Heart left ventricle (tissue), 16 donors: ENCODE measurements at regions of chr9 and their contacts with region 1.

Region 1: DNA sequence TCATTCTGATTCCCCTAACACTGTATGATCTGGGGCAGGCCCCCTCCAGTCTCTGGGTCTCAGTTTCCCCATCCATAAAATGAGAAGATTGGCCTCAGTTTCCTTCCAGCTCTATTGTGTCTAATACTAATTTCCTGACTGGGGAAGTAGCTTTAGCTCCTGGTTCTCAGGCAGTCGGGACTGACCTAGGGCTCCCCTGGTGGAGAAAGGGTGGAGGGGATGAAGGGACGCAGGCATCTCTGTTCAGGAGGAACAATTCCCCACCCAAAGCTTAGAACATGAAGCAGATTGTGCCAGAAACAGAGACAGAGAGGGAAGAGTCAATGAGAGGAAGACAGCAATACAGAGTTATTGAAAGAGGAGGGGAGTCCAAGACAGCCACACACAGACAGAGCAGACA is 14.2 kb upstream of the PTGS1 start:
- DNase-seq: no peak
- ATAC-seq: no peak
- H3K4me3 ChIP-seq: no peak overlapping the region
- H3K27ac ChIP-seq: no peak overlapping the region
- H3K4me1 ChIP-seq: peaks cover 0 to 7% (median 0%) of the 10 kb centered on the region in 12 donors
- H3K27me3 ChIP-seq: no peaks in the 10 kb centered on the region
- CTCF ChIP-seq: peak in 4 of 12 donors; percentile 12 to 24 (median 13)
- POLR2A ChIP-seq: no peak

Region 2: GRCh38 chr9:122113574-122113973 is 243.1 kb before region 1 on chr9:
- intact Hi-C with region 1: loop called in 1 of 10 experiments (anchors 5 kb)
- DNase-seq: no peak
- ATAC-seq: no peak
- H3K4me3 ChIP-seq: no peak overlapping the region
- H3K27ac ChIP-seq: no peak overlapping the region
- H3K4me1 ChIP-seq: no peaks in the 10 kb centered on the region
- H3K27me3 ChIP-seq: no peaks in the 10 kb centered on the region
- CTCF ChIP-seq: no peak
- POLR2A ChIP-seq: no peak

Region 3: DNA sequence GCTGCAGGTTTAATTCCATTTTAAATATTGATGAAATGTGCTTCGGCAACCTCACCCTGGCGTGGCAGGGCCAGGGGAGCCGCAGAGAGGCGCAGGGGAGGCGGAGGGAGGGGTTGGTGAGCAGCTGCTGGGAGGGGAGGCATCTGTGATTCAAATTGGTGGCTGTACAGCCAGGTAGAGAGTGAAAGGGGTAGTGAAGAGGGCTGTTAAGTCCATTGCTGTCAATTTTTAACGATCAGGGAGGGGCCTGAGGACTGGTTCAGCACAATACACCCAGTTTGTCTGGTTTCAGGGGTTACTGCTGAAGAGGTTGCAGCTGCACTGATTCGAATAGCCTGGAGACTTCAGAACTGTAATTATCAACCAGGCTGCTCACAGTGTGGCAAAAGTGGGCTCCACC is 159.2 kb before region 1 on chr9:
- intact Hi-C with region 1: no loop called
- DNase-seq: no peak
- ATAC-seq: no peak
- H3K4me3 ChIP-seq: no peak overlapping the region
- H3K27ac ChIP-seq: no peak overlapping the region
- H3K4me1 ChIP-seq: peaks cover 0 to 7% (median 0%) of the 10 kb centered on the region in 12 donors
- H3K27me3 ChIP-seq: peaks cover 0 to 16% (median 0%) of the 10 kb centered on the region in 9 donors
- CTCF ChIP-seq: no peak
- POLR2A ChIP-seq: no peak

Region 4: DNA sequence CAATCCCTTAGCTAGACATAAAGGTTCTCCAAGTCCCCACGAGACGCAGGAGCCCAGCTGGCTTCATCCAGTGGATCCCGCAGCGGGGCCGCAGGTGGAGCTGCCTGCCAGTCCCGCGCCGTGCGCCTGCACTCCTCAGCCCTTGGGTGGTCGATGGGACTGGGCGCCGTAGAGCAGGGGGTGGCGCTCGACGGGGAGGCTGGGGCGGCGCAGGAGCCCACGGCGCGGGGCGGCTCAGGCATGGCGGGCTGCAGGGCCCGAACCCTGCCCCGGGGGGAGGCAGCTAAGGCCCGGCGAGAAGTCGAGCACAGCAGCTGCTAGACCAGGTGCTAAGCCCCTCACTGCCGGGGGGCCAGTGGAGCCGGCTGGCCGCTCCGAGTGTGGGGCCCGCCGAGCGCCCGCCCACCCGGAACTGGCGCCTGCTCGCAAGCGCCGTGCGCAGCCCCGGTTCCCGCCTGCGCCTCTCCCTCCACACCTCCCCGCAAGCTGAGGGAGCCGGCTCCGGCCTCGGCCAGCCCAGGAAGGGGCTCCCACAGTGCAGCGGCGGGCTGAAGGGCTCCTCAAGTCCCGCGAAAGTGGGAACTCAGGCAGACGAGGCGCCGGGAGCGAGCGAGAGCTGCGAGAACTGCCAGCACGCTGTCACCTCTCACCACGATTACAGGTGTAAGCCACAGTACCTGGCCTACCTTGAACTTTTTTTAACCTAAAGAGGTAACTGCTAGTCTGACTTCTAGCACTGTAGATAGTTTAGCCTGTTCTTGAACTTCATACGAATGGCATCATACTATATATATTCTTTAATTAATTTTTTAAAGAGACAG is 49.7 kb after region 1 on chr9:
- intact Hi-C with region 1: no loop called
- DNase-seq: no peak
- ATAC-seq: no peak
- H3K4me3 ChIP-seq: peak overlapping the region in 2 of 12 donors; percentile 49
- H3K27ac ChIP-seq: no peak overlapping the region
- H3K4me1 ChIP-seq: no peaks in the 10 kb centered on the region
- H3K27me3 ChIP-seq: peaks cover 0 to 8% (median 0%) of the 10 kb centered on the region in 9 donors
- CTCF ChIP-seq: no peak
- POLR2A ChIP-seq: no peak

Region 5: DNA sequence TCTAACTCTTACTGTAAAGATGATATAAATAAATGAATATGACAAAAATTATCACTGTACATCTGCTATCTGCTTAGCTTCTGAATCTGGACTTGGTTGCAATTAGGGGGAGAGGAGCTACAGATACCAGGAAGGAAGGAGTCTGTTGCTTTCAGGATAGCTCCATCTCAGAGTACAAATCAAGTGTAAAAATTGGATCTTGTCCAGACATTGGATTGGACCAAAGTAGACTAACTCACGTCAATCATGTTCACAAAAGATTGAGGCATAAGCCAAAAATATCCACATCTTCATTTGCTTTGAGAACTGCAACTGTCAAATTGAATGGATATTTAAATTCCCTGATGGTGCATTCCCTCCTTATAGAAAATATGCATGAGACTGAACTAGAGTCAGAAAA is 249.1 kb after region 1 on chr9:
- intact Hi-C with region 1: no loop called
- DNase-seq: no peak
- ATAC-seq: no peak
- H3K4me3 ChIP-seq: no peak overlapping the region
- H3K27ac ChIP-seq: no peak overlapping the region
- H3K4me1 ChIP-seq: no peaks in the 10 kb centered on the region
- H3K27me3 ChIP-seq: no peaks in the 10 kb centered on the region
- CTCF ChIP-seq: no peak
- POLR2A ChIP-seq: no peak